ENCODE measurements at regions of chr1 and their contacts with region 1.

Region 1: GRCh38 chr1:58816072-58816746 is 32.4 kb upstream of the JUN start:
- DNase-seq: peak; percentile 97

Region 2: GRCh38 chr1:58883037-58883887 is 67.1 kb after region 1 on chr1:
- intact Hi-C with region 1: loop called (anchors 5 kb)
- DNase-seq: peak; percentile 89